ENCODE measurements at regions of chr11 and their contacts with region 1.

Region 1: GRCh38 chr11:107549253-107549953 is 16.1 kb downstream of the ALKBH8 start:
- H3K4me3 ChIP-seq: no peak overlapping the region
- H3K27ac ChIP-seq: no peak overlapping the region
- H3K4me1 ChIP-seq: no peaks in the 10 kb centered on the region
- CTCF ChIP-seq: no peak

Region 2: DNA sequence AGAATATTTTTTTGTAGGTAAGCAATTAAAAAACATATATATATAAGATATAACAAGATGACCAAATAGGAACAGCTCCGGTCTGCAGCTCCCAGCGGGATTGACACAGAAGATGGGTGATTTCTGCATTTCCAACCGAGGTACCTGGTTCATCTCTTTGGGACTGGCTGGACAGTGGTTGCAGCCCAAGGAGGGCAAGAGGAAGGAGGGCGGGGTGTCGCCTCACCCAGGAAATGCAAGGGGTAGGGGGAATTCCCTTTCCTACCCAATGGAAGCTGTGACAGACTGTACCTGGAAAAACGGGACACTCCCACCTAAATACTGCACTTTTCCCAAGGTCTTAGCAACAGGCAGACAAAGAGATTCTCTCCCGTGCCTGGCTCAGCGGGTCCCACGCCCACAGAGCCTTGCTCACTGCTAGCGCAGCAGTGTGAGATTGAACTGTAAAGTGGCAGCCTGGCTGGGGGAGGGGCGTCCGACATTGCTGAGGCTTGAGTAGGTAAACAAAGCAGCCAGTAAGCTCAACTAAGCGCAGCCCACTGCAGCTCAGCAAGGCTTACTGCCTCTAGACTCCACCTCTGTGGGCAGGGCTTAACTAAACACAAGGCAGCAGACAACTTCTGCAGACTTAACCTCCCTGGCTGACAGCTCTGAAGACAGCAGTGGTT is 255.6 kb before region 1 on chr11:
- CTCF ChIA-PET with region 1: no interaction called
- POLR2A ChIA-PET with region 1: no interaction called
- H3K4me3 ChIP-seq: no peak overlapping the region
- H3K27ac ChIP-seq: no peak overlapping the region
- H3K4me1 ChIP-seq: no peaks in the 10 kb centered on the region
- CTCF ChIP-seq: no peak

Region 3: DNA sequence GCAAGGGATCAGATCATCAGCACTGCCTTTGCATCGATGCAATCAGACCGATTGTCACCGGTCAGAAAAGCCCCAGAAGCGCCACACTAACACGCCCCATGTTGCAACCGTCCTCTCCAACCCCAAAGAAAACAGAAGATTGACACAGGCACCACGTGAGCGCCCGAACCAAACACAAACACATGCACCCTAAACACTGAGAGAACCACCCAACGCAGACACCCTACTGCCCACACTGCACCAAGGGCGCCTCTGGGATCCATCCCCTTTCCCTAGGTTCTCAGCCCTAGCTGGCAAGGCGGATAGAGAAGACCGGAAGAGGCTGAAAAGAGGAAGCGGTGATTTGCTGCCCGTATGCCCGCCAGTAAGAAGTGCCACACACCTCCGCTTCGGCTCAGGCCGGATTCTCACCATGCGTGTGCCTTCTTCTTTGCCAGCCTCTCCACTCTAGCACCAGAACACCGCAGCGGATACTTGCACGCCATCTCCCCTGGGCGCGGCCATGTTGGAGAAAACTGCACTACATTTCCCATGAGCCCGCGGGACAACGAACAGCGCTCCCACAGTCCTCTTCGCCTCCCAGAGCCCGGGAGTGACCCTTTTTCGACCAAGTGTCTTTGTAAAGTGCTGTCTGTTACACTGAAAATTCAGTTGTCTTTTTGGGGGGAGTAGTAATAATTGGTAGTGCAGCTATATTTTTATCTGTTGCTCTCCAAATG is 16.0 kb after region 1 on chr11 and contains the start of gene ALKBH8:
- CTCF ChIA-PET with region 1: interaction called, 85 read pairs
- POLR2A ChIA-PET with region 1: no interaction called
- H3K4me3 ChIP-seq: peak within 1 kb of the TSS; percentile 94
- H3K27ac ChIP-seq: peak within 1 kb of the TSS; percentile 30; the same call in 1 of the 2 replicates
- H3K4me1 ChIP-seq: no peaks in the 10 kb centered on the region
- CTCF ChIP-seq: no peak

Region 4: DNA sequence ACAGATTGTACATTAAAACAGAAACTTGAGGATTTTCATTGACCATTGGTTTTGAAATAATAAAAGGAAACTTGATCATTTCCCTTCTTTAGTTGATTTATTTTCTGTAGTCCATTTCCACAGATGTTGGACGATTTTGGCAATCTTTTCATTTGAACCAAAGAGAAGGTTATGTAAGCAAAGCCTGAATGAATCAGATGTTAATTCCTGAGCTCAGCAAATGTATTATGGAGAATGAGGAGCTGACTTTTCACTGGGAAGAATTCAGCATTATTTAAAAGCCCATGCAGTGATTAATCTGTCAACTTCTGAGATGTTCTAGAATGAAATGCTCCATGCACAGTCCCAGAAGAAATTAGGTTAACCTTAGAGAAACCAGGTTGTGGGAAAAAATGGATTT is 70.5 kb after region 1 on chr11:
- CTCF ChIA-PET with region 1: interaction called, 4 read pairs
- POLR2A ChIA-PET with region 1: interaction called, 10 read pairs
- H3K4me3 ChIP-seq: no peak overlapping the region
- H3K27ac ChIP-seq: no peak overlapping the region
- H3K4me1 ChIP-seq: no peaks in the 10 kb centered on the region
- CTCF ChIP-seq: no peak

Region 5: GRCh38 chr11:107780775-107781174 is 231.4 kb after region 1 on chr11:
- CTCF ChIA-PET with region 1: no interaction called
- POLR2A ChIA-PET with region 1: no interaction called
- H3K4me3 ChIP-seq: no peak overlapping the region
- H3K27ac ChIP-seq: no peak overlapping the region
- H3K4me1 ChIP-seq: 0 out of 2 replicates have a peak, but pooled peaks cover 2% of the 10 kb centered on the region
- CTCF ChIP-seq: no peak